ENCODE measurements at regions of chr6 and their contacts with region 1.

Region 1: GRCh38 chr6:122839477-122839876 is 50.4 kb downstream of the SMPDL3A start:
- DNase-seq: no peak
- ATAC-seq: peak; percentile 79

Region 2: DNA sequence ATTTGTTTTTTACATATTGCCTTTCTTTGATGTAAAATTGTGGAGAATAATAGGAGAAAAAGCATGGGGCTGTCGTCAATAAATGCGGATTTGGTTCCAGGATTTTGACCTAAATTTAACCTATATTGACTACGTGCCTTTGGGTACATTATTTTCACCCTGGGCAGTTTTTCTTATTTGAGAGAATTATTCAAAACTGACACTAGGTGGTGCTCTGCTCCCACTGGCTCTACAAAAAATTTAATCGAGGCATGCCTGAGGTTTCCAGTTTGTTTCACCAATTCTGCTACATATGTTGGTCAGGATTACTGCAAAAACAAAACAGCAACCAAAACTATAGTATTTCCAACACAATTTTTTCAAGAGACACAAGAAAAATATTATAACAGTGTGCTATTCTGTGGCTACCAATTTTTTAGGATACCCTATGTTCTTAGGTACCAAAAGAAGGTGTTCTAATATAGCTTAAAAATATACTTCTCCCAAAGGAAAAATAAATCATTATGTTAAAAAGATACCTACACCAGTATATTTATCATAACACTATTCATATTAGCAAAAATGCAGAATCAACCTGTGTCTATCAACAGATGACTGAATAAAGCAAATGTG is 108.6 kb before region 1 on chr6:
- intact Hi-C with region 1: loop called (anchors 5 kb)
- DNase-seq: no peak
- ATAC-seq: peak; percentile 57

Region 3: DNA sequence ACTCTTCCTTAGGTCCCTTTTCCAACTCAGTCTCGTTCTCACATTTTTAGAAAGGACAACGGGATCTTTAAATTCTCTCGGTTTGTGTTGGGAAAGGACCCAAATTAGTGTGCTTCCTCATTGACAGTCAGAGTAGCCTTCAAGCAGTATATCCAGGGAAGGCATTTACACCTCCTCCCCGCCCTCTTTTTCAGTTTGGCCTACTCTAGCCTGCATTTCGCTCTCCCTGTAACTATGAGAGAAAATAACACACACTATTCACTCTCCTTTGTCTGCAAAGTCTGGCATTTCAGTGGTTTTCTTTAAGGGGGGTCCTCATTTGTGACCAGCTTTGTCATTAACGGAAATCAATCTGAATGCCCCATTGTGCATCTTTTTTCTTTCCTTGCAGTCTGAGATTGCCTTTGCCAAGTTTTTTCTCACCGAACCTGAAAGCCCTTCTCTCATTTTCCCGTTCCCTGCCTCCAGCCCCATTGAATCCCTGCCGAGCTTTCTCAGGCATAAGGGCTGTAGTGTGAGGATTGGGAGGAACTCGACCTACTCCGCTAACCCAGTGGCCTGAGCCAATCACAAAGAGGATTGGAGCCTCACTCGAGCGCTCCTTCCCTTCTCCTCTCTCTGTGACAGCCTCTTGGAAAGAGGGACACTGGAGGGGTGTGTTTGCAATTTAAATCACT is 60.4 kb before region 1 on chr6:
- intact Hi-C with region 1: no loop called
- DNase-seq: no peak
- ATAC-seq: no peak